ENCODE measurements at regions of chr1 and their contacts with region 1.

Region 1: GRCh38 chr1:156860113-156860627 is 495 bp upstream of the NTRK1 start:
- DNase-seq: peak; percentile 66
- H3K4me3 Mint-ChIP-seq: peak overlapping the region; percentile 68
- H3K27ac Mint-ChIP-seq: no peak overlapping the region
- H3K4me1 Mint-ChIP-seq: peaks cover 44% of the 10 kb centered on the region
- H3K27me3 Mint-ChIP-seq: peaks cover 54% of the 10 kb centered on the region

Region 2: DNA sequence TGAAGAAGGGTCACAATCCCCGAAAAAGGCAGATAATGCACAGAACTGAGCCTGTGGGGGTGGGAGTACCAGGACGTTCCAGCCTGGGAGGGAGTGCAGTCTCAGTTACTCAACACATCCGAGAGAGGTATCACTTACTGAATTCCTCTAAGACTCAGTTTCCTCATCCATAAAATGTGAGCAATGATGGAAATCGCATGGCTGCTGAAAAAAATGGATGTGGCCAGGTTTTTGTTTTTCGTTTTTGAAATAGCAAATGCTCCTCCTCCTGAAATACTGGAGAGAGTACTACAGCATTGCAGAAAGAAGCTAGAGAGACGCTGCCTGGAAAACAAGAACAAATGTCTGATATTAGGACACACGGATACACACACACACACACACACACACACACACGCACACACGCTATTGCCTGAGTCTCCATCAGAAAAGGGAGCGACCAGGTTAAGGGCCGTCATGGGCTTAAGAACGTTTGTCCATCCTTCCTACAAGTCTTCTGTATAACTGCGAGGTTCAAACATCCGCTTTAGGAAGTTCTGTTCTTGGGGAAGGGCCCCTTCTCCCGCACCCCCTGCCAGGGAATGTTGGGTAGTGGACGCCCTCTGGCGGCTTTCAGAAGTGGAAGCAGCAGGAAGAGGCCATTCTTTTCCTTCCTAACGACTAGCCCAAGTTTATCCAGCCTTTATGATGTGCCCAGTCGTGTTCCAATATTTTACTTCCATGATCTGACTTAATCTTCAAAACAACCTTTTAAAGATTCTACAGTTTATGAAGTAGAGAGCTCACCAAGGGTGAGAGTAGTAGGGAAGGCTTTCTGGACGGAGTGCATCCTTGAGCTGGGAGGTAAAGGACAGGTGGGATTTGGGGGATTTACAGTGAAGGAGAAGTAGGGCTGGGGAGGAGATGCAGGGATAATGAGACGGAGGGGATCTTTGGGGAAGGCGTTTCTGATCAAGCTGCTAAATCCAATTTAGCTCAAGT is 182.3 kb before region 1 on chr1:
- CTCF ChIA-PET with region 1: no interaction called
- POLR2A ChIA-PET with region 1: no interaction called
- intact Hi-C with region 1: no loop called
- DNase-seq: peak; percentile 44
- H3K4me3 Mint-ChIP-seq: no peak overlapping the region
- H3K27ac Mint-ChIP-seq: no peak overlapping the region
- H3K4me1 Mint-ChIP-seq: peaks cover 12% of the 10 kb centered on the region
- H3K27me3 Mint-ChIP-seq: peaks cover 56% of the 10 kb centered on the region

Region 3: GRCh38 chr1:156689035-156689952 is 170.9 kb before region 1 on chr1:
- CTCF ChIA-PET with region 1: interaction called, 78 read pairs
- POLR2A ChIA-PET with region 1: no interaction called
- intact Hi-C with region 1: loop called (anchors 5 kb)
- DNase-seq: peak; percentile 83
- H3K4me3 Mint-ChIP-seq: no peak overlapping the region
- H3K27ac Mint-ChIP-seq: no peak overlapping the region
- H3K4me1 Mint-ChIP-seq: peaks cover 16% of the 10 kb centered on the region
- H3K27me3 Mint-ChIP-seq: peaks cover 55% of the 10 kb centered on the region

Region 4: GRCh38 chr1:156804572-156805243 is 55.5 kb before region 1 on chr1:
- CTCF ChIA-PET with region 1: interaction called, 252 read pairs
- POLR2A ChIA-PET with region 1: interaction called, 29 read pairs
- intact Hi-C with region 1: no loop called
- DNase-seq: no peak
- H3K4me3 Mint-ChIP-seq: no peak overlapping the region
- H3K27ac Mint-ChIP-seq: peak overlapping the region; percentile 68
- H3K4me1 Mint-ChIP-seq: peaks cover 59% of the 10 kb centered on the region
- H3K27me3 Mint-ChIP-seq: no peaks in the 10 kb centered on the region

Region 5: GRCh38 chr1:156833603-156834002 is 26.6 kb before region 1 on chr1:
- CTCF ChIA-PET with region 1: interaction called, 147 read pairs
- POLR2A ChIA-PET with region 1: interaction called, 7 read pairs
- intact Hi-C with region 1: loop called (anchors 2 kb)
- DNase-seq: peak; percentile 52
- H3K4me3 Mint-ChIP-seq: no peak overlapping the region
- H3K27ac Mint-ChIP-seq: peak overlapping the region; percentile 13
- H3K4me1 Mint-ChIP-seq: peaks cover 42% of the 10 kb centered on the region
- H3K27me3 Mint-ChIP-seq: peaks cover 15% of the 10 kb centered on the region

Region 6: DNA sequence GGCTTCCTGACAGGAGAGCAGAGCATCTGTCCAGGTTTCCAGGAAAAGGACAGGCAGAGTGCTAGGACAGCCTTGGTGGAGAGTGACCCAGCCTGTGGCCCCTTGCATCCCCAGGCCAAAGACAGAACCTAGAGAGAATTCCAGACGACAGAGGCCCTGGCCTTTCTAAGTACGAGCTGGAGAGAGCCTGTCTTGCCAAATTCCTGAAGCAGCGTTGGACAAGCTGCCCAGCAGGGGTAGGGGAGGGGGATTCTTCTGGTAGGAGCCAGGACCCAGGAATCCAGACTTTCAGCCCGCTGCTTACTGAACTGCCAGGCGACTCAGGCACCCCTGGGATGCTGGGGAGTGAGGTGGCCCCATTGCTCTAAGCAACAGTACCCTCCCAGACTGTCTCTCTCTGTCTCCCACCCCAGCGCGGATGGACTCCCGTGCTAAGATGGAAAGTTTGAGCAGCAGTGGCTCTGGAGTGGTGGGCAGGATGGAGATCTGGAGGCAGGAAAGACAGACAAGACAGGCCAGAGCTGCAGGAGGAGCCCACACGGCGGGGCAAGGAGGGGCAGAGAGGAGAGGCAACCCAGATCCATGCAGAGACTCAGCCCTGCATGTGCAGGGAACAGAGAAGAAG is 24.5 kb after region 1 on chr1:
- CTCF ChIA-PET with region 1: interaction called, 74 read pairs
- POLR2A ChIA-PET with region 1: interaction called, 3 read pairs
- intact Hi-C with region 1: no loop called
- DNase-seq: no peak
- H3K4me3 Mint-ChIP-seq: no peak overlapping the region
- H3K27ac Mint-ChIP-seq: no peak overlapping the region
- H3K4me1 Mint-ChIP-seq: no peaks in the 10 kb centered on the region
- H3K27me3 Mint-ChIP-seq: peaks cover 31% of the 10 kb centered on the region

Region 7: DNA sequence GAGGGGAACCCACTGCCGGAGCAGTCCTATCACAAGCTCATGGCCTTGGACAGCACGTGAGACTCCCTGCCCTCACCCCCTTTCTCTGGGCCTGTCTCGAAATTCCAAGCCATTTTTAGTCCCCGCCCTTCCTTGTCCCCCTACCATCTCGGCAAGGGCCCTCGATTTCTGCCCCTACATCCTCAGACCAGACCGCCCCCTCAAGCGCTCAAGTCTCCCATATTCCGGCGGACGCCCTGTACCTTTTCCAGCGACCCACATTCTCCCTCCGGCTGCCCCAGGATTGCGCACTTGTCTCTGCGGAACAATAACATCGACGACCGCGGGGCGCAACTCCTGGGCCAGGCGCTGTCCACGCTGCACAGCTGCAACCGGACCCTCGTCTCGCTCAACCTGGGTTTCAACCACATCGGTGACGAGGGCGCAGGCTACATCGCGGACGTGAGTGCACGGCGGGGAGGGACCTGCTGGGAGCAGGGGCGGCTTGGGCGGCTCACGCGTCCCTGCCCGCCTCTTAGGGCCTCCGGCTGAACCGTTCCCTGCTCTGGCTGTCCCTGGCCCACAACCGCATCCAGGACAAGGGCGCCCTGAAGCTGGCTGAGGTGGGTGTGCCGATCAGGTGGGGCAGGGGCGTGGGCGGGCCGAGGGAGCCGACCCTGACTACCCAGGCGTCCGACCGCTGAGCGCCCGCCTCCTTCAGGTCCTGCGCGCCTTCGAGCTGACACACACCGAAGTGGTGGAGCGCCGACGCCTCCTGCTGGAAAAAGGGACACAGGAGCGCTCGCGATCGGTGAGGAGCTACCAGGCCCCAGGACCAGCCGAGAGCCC is 67.3 kb after region 1 on chr1:
- CTCF ChIA-PET with region 1: interaction called, 15 read pairs
- POLR2A ChIA-PET with region 1: no interaction called
- intact Hi-C with region 1: no loop called
- DNase-seq: peak; percentile 79
- H3K4me3 Mint-ChIP-seq: no peak overlapping the region
- H3K27ac Mint-ChIP-seq: no peak overlapping the region
- H3K4me1 Mint-ChIP-seq: peaks cover 16% of the 10 kb centered on the region
- H3K27me3 Mint-ChIP-seq: peaks cover 75% of the 10 kb centered on the region